ENCODE measurements at regions of chr12 and their contacts with region 1.

Region 1: DNA sequence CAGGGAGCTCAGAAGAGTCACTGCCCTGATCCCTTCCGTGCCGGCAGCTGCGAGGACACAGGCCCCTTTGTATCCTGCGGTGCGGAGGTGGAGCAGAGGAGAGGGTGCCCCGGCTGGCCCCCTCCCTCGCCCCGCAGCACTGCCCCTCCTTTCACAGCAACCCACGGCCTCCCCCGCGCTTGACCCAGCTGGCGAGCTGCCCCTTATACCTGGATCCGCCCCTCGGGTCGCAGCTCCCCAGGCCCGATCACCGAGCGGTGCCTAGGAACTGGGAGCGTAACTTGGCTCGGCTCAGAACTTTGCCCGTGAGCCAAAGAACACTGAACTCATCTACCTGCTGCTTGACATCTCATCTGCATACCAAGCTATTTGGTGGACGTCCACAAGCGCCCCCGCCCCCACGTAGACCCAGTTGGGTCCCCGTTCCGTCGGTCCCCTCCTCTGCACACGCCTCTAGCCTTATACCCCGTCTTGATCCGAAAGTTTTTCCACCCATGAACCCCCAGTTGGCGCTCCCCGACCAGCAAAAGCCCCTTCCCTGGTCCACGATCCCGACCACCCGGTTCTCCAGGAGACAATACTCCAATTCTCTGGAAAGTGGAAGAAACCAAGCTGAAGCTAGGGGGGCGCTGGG is 697 bp upstream of the DNAJC14 start:
- DNase-seq: no peak
- ATAC-seq: peak; percentile 70
- H3K4me3 ChIP-seq: peak overlapping the region; percentile 75 to 92
- H3K27ac ChIP-seq: peak overlapping the region; percentile 92
- H3K4me1 ChIP-seq: peaks cover 24% of the 10 kb centered on the region
- H3K27me3 ChIP-seq: no peaks in the 10 kb centered on the region
- CTCF ChIP-seq: no peak

Region 2: DNA sequence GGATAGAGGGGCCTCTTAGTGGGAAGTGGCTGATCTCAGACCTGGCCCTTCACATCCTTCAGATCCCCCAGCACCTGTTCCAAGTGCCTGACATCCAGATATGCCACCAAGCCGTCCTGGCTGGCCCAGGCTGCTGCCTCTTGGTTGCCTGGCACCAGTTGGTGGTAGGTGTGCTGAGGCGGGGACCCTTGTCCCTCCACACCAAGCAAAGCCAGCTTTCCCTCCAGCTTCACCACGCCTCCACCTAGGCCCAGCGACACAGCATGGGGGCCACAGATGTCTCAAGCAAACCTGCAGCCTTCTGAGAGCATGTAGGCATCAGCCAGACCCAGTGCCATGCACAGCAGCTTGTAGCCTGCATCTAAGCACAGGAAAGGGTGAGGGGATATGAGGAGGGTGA is 97.8 kb before region 1 on chr12:
- CTCF ChIA-PET with region 1: no interaction called
- POLR2A ChIA-PET with region 1: no interaction called
- in situ Hi-C with region 1: no loop called
- intact Hi-C with region 1: no loop called
- DNase-seq: no peak
- ATAC-seq: no peak
- H3K4me3 ChIP-seq: no peak overlapping the region
- H3K27ac ChIP-seq: no peak overlapping the region
- H3K4me1 ChIP-seq: peaks cover 12% of the 10 kb centered on the region
- H3K27me3 ChIP-seq: no peaks in the 10 kb centered on the region
- CTCF ChIP-seq: no peak

Region 3: DNA sequence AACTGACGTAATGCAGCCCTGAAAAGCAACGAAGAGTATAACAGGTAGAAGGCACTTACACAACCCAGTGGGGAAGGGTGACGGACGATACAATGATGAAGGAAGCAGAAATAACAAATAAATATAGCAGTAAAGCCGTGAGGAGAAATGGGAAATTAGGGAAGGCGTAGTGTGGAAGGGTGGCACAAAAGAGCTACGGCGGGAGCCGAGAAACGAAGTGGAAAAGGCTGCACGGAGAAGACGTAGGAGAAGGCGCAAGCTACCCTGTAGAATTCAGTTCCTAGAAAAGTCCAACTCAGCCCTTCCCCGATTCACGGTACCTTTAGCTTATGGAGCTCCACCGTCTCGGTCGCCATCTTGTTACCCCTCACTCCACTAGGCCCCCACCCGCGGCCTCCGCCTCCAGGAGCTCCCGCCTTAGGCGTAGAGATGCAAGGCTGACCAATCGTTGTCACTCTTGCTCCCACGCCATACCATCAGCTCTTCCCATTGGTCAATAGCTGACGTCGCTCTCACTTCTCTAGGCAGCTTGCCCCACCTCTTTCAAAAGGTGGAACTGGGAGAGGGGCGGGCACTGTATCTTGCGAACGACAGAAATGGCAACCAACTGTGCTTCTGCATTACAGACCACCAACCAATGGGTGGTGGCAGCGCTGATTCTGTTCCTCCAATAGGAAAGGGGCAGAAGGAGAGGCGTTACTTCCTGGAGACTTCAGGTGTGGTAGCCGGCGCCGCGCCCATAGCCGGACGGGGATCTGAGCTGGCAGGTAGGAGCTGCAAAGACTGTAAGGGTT is 12.5 kb before region 1 on chr12 and contains the starts of genes ORMDL2 and SARNP:
- CTCF ChIA-PET with region 1: interaction called, 6 read pairs
- POLR2A ChIA-PET with region 1: interaction called, 21 read pairs
- in situ Hi-C with region 1: no loop called
- intact Hi-C with region 1: no loop called
- DNase-seq: peak; percentile 100
- ATAC-seq: peak; percentile 97
- H3K4me3 ChIP-seq: peak within 1 kb of the TSS; percentile 89 to 100
- H3K27ac ChIP-seq: peak within 1 kb of the TSS; percentile 100
- H3K4me1 ChIP-seq: peaks cover 16% of the 10 kb centered on the region
- H3K27me3 ChIP-seq: no peaks in the 10 kb centered on the region
- CTCF ChIP-seq: no peak
- total RNA-seq, gene ORMDL2: 59.6 TPM
- total RNA-seq, gene SARNP: 69.3 TPM

Region 4: GRCh38 chr12:55926738-55927587 is 96.9 kb after region 1 on chr12:
- CTCF ChIA-PET with region 1: interaction called, 22 read pairs
- POLR2A ChIA-PET with region 1: interaction called, 8 read pairs
- in situ Hi-C with region 1: no loop called
- intact Hi-C with region 1: loop called (anchors 2 kb)
- DNase-seq: peak; percentile 84
- ATAC-seq: peak; percentile 89
- H3K4me3 ChIP-seq: peak overlapping the region; percentile 67 to 91
- H3K27ac ChIP-seq: peak overlapping the region; percentile 100
- H3K4me1 ChIP-seq: peaks cover 32% of the 10 kb centered on the region
- H3K27me3 ChIP-seq: no peaks in the 10 kb centered on the region
- CTCF ChIP-seq: peak; percentile 96

Region 5: DNA sequence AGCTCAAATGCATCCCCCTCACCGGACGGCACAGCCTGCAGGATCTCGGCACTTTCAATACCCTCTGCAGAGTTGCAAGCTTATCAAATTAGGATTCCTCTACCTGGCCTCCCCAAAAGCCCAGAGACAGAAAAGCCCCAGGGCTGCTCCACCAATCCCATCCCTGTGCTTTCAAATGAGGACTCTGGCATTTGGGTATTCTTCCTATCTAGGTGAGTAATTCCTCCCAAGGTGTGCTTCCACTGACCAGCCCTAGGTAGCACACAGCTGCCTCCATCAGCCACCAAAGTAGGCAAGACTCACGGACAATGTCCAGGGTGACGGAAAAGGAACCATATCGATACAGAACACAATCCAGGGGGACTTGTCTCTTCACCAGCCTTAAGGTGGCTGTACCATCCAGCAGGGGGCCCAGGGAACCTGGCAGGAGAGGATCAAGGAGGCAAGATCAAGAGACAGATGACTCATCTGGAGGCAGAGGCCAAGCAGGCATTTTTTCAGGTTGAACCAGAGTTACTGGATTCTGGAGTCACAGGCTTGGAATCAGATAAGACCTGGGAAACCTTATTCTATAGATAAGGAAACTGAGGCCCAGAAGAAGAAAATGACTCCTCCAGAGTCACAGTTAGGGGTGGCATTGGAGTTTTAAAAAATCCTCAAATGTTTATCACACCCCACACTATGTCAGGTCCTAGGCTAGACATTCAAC is 125.9 kb after region 1 on chr12:
- CTCF ChIA-PET with region 1: no interaction called
- POLR2A ChIA-PET with region 1: interaction called, 10 read pairs
- in situ Hi-C with region 1: no loop called
- intact Hi-C with region 1: no loop called
- DNase-seq: no peak
- ATAC-seq: peak; percentile 78
- H3K4me3 ChIP-seq: no peak overlapping the region
- H3K27ac ChIP-seq: no peak overlapping the region
- H3K4me1 ChIP-seq: no peaks in the 10 kb centered on the region
- H3K27me3 ChIP-seq: no peaks in the 10 kb centered on the region
- CTCF ChIP-seq: no peak

Region 6: GRCh38 chr12:57751788-57752667 is 1921.9 kb after region 1 on chr12 and contains the start of gene CDK4:
- CTCF ChIA-PET with region 1: no interaction called
- POLR2A ChIA-PET with region 1: interaction called, 12 read pairs
- in situ Hi-C with region 1: no loop called
- intact Hi-C with region 1: no loop called
- DNase-seq: peak; percentile 97
- ATAC-seq: peak; percentile 87
- H3K4me3 ChIP-seq: peak within 1 kb of the TSS; percentile 85 to 98
- H3K27ac ChIP-seq: peak within 1 kb of the TSS; percentile 98
- H3K4me1 ChIP-seq: peaks cover 14% of the 10 kb centered on the region
- H3K27me3 ChIP-seq: peaks cover 9% of the 10 kb centered on the region
- CTCF ChIP-seq: no peak
- total RNA-seq, gene CDK4: 201 TPM